ENCODE measurements at regions of chr15 and their contacts with region 1.

Region 1: GRCh38 chr15:61644550-61644949 is 415.4 kb upstream of the RORA start:
- DNase-seq: no peak
- H3K4me3 ChIP-seq: no peak overlapping the region
- H3K27ac ChIP-seq: no peak overlapping the region
- H3K4me1 ChIP-seq: no peaks in the 10 kb centered on the region
- H3K27me3 ChIP-seq: no peaks in the 10 kb centered on the region
- CTCF ChIP-seq: no peak
- EP300 ChIP-seq: no peak
- POLR2A ChIP-seq: no peak

Region 2: DNA sequence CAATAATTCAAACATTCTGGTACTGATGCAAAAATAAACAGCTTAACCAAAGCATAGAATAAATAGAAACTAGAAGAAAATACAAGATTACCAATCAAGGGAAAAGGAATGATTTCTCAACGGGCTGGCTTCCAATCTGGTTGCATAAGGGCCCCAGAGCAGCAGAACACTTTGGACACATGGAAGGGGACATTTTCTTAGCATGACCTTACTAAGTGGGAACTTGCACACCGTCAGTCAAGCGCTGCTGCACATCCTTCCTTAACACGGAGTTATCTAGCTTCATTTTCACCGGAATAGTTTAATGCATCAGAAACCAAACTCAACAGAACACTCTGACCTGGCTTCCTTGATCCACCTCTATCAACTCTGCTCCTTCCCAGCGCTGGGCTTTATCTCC is 27.2 kb after region 1 on chr15:
- in situ Hi-C with region 1: no loop called
- intact Hi-C with region 1: loop called (anchors 1 kb)
- DNase-seq: no peak
- H3K4me3 ChIP-seq: no peak overlapping the region
- H3K27ac ChIP-seq: no peak overlapping the region
- H3K4me1 ChIP-seq: no peaks in the 10 kb centered on the region
- H3K27me3 ChIP-seq: no peaks in the 10 kb centered on the region
- CTCF ChIP-seq: no peak
- EP300 ChIP-seq: no peak
- POLR2A ChIP-seq: no peak

Region 3: GRCh38 chr15:61929452-61929851 is 284.9 kb after region 1 on chr15:
- in situ Hi-C with region 1: no loop called
- intact Hi-C with region 1: no loop called
- DNase-seq: no peak
- H3K4me3 ChIP-seq: no peak overlapping the region
- H3K27ac ChIP-seq: no peak overlapping the region
- H3K4me1 ChIP-seq: no peaks in the 10 kb centered on the region
- H3K27me3 ChIP-seq: no peaks in the 10 kb centered on the region
- CTCF ChIP-seq: no peak
- EP300 ChIP-seq: no peak
- POLR2A ChIP-seq: no peak

Region 4: DNA sequence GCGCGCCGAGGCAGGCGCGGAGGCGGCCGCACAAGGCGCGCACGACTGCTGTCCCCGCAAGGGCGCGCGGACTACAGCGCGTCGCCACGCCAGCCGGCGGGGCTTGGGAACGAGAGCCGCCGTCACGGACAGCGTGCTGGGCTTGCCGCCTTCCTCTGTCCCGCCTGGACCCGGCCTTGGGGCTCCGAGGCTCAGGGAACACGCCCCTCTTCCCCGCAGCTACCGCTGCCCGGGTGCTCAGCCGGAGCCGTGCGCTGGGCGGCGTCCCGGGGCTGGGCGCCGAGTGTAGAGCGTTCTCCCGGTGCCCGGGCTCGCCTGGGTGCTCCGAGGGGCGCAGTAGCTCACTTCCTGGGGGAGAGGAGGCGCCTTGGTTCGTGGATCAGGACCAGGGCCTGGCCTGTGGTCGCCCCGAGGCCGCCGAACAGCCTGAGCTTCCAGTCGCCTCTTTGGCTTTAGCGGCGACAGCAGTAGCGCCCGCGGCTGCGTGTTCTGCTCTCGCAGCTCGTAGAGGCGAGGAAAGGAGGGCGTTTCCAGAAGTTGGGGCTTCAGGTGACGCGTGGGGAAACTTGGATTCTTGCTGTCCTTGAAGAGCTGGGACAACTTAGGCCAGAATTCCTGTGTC is 747.2 kb after region 1 on chr15:
- in situ Hi-C with region 1: no loop called
- intact Hi-C with region 1: no loop called
- DNase-seq: peak; percentile 59
- H3K4me3 ChIP-seq: peak overlapping the region; percentile 71 to 98 (median 89)
- H3K27ac ChIP-seq: peak overlapping the region; percentile 80 to 88 (median 88)
- H3K4me1 ChIP-seq: peaks cover 5 to 17% (median 12%) of the 10 kb centered on the region in 4 donors
- H3K27me3 ChIP-seq: no peaks in the 10 kb centered on the region
- CTCF ChIP-seq: peak in 3 of 5 experiments; percentile 26 to 44 (median 30)
- EP300 ChIP-seq: no peak
- POLR2A ChIP-seq: no peak

Measured in transverse colon (tissue), 4 donors.